ENCODE measurements at regions of chr11 and their contacts with region 1.

Region 1: DNA sequence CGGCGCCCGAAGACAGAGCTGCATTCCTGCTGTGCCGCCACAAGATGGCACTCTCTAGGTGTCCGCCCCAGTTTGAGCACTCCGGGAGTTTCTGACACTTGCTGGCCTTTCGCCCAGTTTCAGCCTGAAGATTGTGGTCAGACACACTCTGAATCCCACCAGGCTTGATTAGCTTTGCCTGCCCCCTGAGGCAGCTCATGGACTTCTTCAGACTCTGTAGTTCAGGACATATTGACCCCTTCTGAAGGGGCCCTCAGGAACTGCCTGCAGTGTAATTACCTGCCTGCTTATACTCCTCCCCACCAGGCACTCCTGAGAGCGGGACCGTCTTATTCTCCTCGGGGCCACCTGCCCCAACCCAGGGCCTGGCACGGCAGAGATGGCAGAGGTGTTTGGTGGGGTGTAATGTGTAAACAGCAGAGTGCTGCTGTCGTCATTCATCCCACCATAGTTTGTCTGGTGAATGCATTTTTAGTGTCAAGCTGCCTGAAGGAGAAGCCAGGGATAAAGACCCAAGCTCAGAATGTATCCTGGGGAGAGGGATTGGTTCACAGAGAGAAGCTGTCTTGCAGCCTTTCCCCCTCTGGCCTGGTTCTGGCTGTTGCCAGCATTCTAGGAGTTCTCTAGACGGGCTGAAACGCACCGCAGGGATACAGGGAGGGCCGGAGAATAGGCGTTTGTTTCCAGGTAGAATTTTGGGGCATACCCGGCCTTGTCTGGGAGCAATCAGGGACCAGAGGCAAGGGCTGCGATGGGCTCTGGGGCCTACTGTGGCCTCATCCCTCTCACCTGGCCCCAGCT is 46.4 kb downstream of the EIF3F start:
- DNase-seq: peak; percentile 91
- H3K4me3 ChIP-seq: no peak overlapping the region
- H3K27ac ChIP-seq: peak overlapping the region in 1 of 2 experiments; percentile 31; a peak in 1 of 4 replicates
- H3K4me1 ChIP-seq: peaks cover 0 to 46% of the 10 kb centered on the region in 2 experiments; a peak in 1 of 4 replicates
- H3K27me3 ChIP-seq: no peaks in the 10 kb centered on the region
- CTCF ChIP-seq: peak; percentile 88
- EP300 ChIP-seq: no peak
- RAD21 ChIP-seq: peak; percentile 95

Region 2: GRCh38 chr11:8018484-8019313 is 14.8 kb before region 1 on chr11:
- CTCF ChIA-PET with region 1: interaction called, 57 read pairs
- POLR2A ChIA-PET with region 1: no interaction called
- DNase-seq: peak; percentile 93
- H3K4me3 ChIP-seq: peak overlapping the region; percentile 62 to 72
- H3K27ac ChIP-seq: peak overlapping the region in 1 of 2 experiments; percentile 38; a peak in 2 of 4 replicates
- H3K4me1 ChIP-seq: peaks cover 10 to 16% of the 10 kb centered on the region in 2 experiments; a peak in 3 of 4 replicates
- H3K27me3 ChIP-seq: no peaks in the 10 kb centered on the region
- CTCF ChIP-seq: no peak
- EP300 ChIP-seq: no peak
- RAD21 ChIP-seq: no peak

Region 3: GRCh38 chr11:8056810-8057463 is 23.4 kb after region 1 on chr11:
- CTCF ChIA-PET with region 1: interaction called, 30 read pairs
- POLR2A ChIA-PET with region 1: interaction called, 3 read pairs
- DNase-seq: no peak
- H3K4me3 ChIP-seq: no peak overlapping the region
- H3K27ac ChIP-seq: peak overlapping the region in 1 of 2 experiments; percentile 64; a peak in 2 of 4 replicates
- H3K4me1 ChIP-seq: peaks cover 0 to 47% of the 10 kb centered on the region in 2 experiments; a peak in 1 of 4 replicates
- H3K27me3 ChIP-seq: no peaks in the 10 kb centered on the region
- CTCF ChIP-seq: no peak
- EP300 ChIP-seq: peak in 1 of 2 experiments; percentile 61; a peak in 2 of 4 replicates
- RAD21 ChIP-seq: 0 out of 2 replicates have a peak, but pooled peaks have one; percentile 6

Region 4: DNA sequence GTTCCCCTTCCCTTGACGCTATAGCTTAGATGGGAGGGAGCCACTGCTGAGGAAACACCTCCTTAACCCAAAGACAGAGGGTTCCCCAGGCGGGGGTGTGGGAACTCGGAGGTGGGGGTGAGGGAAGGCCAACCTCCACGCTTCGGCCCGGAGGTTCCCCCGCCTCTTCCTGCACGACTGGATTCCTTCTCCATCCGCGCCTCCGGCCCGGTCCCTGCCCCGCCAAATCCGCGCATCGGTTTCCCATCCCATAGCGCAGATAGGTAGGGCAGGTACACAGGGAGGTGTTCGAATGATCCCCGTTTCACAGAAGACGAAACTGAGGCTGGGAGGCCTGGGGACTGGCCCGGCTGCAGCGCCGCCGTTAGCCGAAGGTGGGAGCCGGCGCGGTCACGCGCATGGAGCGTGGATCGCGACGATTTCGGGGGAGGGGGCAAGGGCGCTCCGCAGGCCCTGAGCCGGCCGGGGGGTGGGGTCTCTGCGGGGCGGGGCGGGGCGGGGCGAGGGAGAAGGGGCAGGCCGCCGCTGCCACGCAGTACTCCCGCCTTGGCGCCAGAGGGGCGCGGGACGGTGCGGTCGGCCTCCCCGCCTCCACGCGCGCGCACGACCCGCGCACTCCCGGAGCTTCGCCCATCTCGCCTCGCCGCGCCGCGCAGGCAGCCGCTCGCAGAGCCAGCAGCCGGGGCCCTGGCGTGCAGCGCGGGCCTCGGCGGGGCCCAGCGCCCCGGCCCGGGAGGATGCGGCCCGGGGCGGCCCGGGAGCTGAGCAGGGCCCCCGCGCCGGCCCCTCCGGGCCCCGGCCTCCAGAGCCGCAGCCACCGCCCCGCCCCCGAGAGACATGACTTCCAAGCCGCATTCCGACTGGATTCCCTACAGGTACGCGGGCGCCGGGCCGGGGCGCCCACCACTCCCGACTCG is 47.4 kb after region 1 on chr11 and contains the start of gene TUB:
- CTCF ChIA-PET with region 1: interaction called, 620 read pairs
- POLR2A ChIA-PET with region 1: interaction called, 13 read pairs
- DNase-seq: peak; percentile 97
- H3K4me3 ChIP-seq: peak within 1 kb of the TSS; percentile 67 to 73
- H3K27ac ChIP-seq: peak within 1 kb of the TSS in 1 of 2 experiments; percentile 92; a peak in 2 of 4 replicates
- H3K4me1 ChIP-seq: peaks cover 18 to 52% of the 10 kb centered on the region in 2 experiments; a peak in 3 of 4 replicates
- H3K27me3 ChIP-seq: no peaks in the 10 kb centered on the region
- CTCF ChIP-seq: no peak
- EP300 ChIP-seq: no peak
- RAD21 ChIP-seq: no peak
- polyA plus RNA-seq, gene TUB: 11.3 and 16.9 TPM in 2 replicates

Region 5: DNA sequence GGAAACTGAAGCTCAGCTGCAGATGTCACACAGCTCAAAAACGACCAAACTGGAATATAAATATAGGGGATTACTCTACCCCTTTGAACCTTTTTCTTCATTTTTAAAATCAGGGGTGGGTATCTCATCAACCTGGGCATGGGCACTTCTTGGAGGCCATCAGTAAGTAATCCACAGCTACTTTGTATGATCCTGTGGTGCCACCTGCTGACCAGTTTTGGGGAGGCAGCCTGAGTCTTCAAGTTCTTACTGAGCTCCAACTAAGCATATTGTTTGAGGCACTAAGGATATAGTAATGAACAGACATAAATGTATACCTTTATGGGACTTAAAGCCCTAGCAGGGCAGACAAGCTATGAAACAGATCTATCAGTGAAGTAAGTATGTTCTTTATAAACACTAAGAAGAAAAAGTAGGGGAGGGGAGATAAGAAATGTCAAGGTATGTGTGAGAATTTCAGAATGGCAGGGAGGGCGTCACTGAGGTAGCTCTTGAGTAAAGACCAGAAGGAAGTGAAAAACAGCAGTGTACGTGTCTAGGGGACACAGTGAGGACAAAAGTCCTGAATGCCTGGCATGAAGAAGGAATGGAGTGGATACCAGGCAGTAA is 65.9 kb after region 1 on chr11:
- CTCF ChIA-PET with region 1: interaction called, 620 read pairs
- POLR2A ChIA-PET with region 1: interaction called, 4 read pairs
- DNase-seq: peak; percentile 69
- H3K4me3 ChIP-seq: no peak overlapping the region; a peak in 1 of 4 replicates
- H3K27ac ChIP-seq: 0 out of 4 replicates have a peak overlapping the region, but pooled peaks of 1 of the 2 experiments have one; percentile 33
- H3K4me1 ChIP-seq: peaks cover 2 to 6% of the 10 kb centered on the region in 2 experiments; a peak in 3 of 4 replicates
- H3K27me3 ChIP-seq: no peaks in the 10 kb centered on the region
- CTCF ChIP-seq: peak; percentile 92
- EP300 ChIP-seq: no peak
- RAD21 ChIP-seq: peak; percentile 80

Region 6: DNA sequence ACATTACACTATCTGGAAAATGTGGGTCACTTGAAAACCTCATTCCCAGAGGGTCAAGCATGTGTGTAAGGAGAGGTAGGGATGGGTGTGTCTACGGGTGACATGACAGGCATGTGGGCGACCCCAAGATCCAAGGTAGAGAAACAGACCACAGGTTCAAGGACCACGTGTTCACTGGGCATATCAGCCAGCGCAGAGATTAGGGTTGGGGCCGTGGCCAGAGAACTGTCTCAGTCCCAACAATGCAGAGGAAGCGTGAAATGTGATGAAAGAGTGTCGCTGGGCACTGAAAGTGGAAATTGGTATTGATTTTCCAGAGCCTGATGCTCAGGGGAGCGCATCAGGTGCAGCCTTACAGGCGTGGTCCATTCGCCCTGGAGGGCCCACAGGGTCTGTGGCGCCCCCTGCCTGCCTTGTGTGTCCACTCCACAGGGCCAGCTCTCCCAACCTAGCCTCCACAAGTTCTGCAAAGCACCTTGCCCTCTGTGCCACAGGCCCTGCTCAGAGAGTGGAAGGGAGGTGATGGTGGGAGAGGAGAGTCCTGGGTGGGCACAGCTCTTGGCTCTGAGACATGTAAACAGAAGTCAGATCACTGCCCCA is 284.9 kb after region 1 on chr11:
- CTCF ChIA-PET with region 1: no interaction called
- POLR2A ChIA-PET with region 1: no interaction called
- DNase-seq: no peak
- H3K4me3 ChIP-seq: no peak overlapping the region
- H3K27ac ChIP-seq: no peak overlapping the region
- H3K4me1 ChIP-seq: peaks cover 0 to 13% of the 10 kb centered on the region in 2 experiments; a peak in 2 of 4 replicates
- H3K27me3 ChIP-seq: 0 out of 2 replicates have a peak, but pooled peaks cover 4% of the 10 kb centered on the region
- CTCF ChIP-seq: no peak; the same call in 1 of the 2 replicates
- EP300 ChIP-seq: no peak
- RAD21 ChIP-seq: peak; percentile 43

Region 7: DNA sequence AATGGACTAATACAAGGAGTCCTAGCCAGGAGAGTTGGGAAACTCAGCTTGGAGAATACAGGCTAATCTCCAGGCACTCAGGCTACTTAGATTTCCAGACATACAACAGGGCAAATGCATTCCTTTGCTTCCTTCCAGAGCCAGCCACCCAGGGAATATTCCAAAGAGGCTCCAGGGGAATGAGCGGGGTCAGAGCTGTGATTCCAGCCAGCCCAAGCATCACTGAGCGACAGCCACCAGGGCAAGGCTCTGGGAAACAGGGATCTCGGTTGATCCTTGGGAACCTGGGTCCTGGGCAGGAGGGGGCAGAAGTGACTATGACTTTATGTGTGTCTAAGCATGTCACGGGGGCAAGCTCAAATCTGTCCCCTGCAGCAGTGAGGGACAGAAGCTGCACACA is 342.4 kb after region 1 on chr11:
- CTCF ChIA-PET with region 1: no interaction called
- POLR2A ChIA-PET with region 1: no interaction called
- DNase-seq: no peak
- H3K4me3 ChIP-seq: no peak overlapping the region
- H3K27ac ChIP-seq: no peak overlapping the region
- H3K4me1 ChIP-seq: peaks cover 0 to 2% of the 10 kb centered on the region in 2 experiments; a peak in 1 of 4 replicates
- H3K27me3 ChIP-seq: no peaks in the 10 kb centered on the region
- CTCF ChIP-seq: no peak
- EP300 ChIP-seq: no peak
- RAD21 ChIP-seq: no peak